Naive thymus-derived CD4-positive, alpha-beta T cell (primary cell): ENCODE measurements at regions of chr2 and their contacts with region 1.

Region 1: DNA sequence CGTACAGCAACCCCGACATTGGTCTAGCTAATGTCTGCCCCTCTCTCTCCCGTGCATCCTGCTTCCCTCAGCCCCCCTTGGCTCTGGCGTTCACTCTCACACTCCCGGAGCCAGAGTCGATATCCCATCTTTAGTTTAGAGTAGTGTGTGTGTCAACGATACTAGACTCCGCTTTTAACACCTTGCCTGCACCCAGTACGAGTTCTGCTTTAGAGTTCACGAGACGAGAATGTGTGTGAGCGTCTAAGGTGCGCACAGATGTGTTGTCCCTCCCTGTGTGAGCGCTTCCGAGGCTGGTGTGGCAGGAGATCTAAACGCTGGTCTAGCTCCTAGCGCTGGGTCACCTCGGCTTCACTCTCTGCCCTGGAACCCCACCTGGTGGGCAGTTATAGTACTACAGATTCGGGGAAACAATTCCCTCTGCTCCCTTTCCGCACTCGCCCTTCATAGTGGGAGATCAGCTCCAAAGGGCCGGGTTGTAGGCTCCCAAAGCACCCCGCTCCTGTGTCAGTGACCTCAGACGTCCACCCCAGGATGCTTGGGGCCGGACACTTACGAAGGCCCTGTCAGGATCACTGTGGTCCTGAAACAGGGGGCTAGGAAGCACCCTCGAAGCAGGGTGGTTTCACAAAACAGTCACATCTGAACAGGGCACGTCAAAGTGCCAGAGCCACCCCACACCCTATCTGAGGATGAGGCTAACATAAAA is 2.6 kb upstream of the CYP26B1 start:
- DNase-seq: peak in 7 of 9 donors; percentile 26 to 64 (median 53)
- ATAC-seq: peak; percentile 74
- H3K4me3 ChIP-seq: peak overlapping the region; percentile 64
- H3K4me3 Mint-ChIP-seq: peak overlapping the region; percentile 64 to 89 (median 78)
- H3K27ac ChIP-seq: no peak overlapping the region
- H3K27ac Mint-ChIP-seq: peak overlapping the region in 2 of 9 donors; percentile 7 to 54
- H3K4me1 ChIP-seq: peaks cover 4 to 12% of the 10 kb centered on the region in 2 donors
- H3K4me1 Mint-ChIP-seq: peaks cover 29 to 43% (median 36%) of the 10 kb centered on the region in 7 donors
- H3K27me3 ChIP-seq: peaks cover 6 to 22% of the 10 kb centered on the region in 2 donors
- H3K27me3 Mint-ChIP-seq: peaks cover 59 to 73% (median 67%) of the 10 kb centered on the region in 5 donors

Region 2: DNA sequence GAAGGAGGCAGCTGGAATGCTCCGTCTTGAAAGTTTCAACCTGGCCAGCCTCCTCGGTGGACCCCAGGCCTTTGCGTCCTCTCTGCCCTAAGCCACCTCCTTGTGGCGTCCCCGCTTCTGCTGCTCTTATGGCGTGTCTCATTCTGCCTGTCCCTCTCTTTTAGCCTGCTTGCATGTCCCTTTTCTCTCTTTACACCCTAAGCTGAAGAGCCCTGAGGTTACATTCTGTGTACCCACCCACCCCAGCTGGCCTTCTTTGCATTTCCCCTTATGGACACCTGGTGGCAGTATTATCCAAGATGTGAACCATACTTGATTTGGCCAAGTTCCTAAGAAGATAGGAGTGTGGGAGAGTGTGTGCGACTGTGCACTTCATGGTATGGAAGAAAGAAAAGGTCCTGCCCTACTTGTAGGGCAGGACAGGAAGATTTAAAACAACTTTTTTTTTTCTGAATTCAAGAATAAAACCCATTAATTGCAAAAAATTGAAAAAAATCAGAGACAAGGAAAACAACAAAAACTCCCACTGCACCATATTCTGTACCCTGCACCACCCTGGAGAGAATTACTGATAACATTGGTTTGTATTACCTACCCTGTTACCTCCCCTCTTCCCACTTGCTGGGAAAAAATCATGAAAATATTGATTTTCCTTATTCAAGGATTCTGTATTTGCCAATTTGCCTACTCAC is 619.5 kb before region 1 on chr2:
- CTCF ChIA-PET with region 1: no interaction called
- POLR2A ChIA-PET with region 1: no interaction called
- intact Hi-C with region 1: loop called in 1 of 2 experiments (anchors 1 kb)
- DNase-seq: no peak
- ATAC-seq: peak; percentile 54
- H3K4me3 ChIP-seq: no peak overlapping the region
- H3K4me3 Mint-ChIP-seq: no peak overlapping the region
- H3K27ac ChIP-seq: no peak overlapping the region
- H3K27ac Mint-ChIP-seq: no peak overlapping the region
- H3K4me1 ChIP-seq: no peaks in the 10 kb centered on the region
- H3K4me1 Mint-ChIP-seq: peaks cover 0 to 5% (median 0%) of the 10 kb centered on the region in 7 donors
- H3K27me3 ChIP-seq: no peaks in the 10 kb centered on the region
- H3K27me3 Mint-ChIP-seq: peaks cover 8 to 66% (median 42%) of the 10 kb centered on the region in 5 donors

Region 3: GRCh38 chr2:72165792-72166191 is 15.5 kb after region 1 on chr2:
- CTCF ChIA-PET with region 1: no interaction called
- POLR2A ChIA-PET with region 1: no interaction called
- intact Hi-C with region 1: no loop called
- DNase-seq: no peak
- ATAC-seq: no peak
- H3K4me3 ChIP-seq: no peak overlapping the region
- H3K4me3 Mint-ChIP-seq: no peak overlapping the region
- H3K27ac ChIP-seq: no peak overlapping the region
- H3K27ac Mint-ChIP-seq: no peak overlapping the region
- H3K4me1 ChIP-seq: no peaks in the 10 kb centered on the region
- H3K4me1 Mint-ChIP-seq: no peaks in the 10 kb centered on the region
- H3K27me3 ChIP-seq: peaks cover 0 to 2% of the 10 kb centered on the region in 2 donors
- H3K27me3 Mint-ChIP-seq: peaks cover 4 to 20% (median 14%) of the 10 kb centered on the region in 5 donors

Region 4: DNA sequence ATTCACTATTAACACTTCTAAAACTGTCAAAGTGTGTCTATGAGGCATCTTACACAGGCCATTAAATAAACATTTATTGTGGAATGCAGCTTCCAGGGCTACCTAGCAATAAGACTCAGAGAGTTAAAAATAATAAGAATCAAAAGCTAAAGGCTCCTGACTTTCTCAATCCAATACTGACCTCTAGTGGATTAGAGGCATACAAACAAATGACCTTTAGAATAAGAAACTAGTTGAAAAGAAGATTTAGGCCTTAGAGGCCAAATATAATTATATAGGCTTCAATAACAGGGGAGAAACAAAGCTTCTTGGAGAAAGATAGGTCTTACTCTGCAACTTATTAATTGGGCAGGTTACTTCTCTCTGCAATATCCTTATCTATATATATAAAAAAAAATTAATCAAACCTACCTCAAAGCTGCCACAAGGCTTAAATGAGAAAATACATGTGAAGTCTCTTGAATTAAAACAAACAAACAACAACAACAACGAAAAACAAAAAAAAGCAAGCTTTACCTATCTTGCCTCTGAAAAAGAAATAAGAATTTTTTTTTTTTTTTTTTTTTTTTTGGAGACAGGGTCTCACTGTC is 429.4 kb after region 1 on chr2:
- CTCF ChIA-PET with region 1: no interaction called
- POLR2A ChIA-PET with region 1: no interaction called
- intact Hi-C with region 1: loop called in 1 of 2 experiments (anchors 5 kb)
- DNase-seq: peak in 6 of 9 donors; percentile 0 to 32 (median 10)
- ATAC-seq: no peak
- H3K4me3 ChIP-seq: no peak overlapping the region
- H3K4me3 Mint-ChIP-seq: no peak overlapping the region
- H3K27ac ChIP-seq: no peak overlapping the region
- H3K27ac Mint-ChIP-seq: no peak overlapping the region
- H3K4me1 ChIP-seq: no peaks in the 10 kb centered on the region
- H3K4me1 Mint-ChIP-seq: peaks cover 0 to 8% (median 0%) of the 10 kb centered on the region in 7 donors
- H3K27me3 ChIP-seq: no peaks in the 10 kb centered on the region
- H3K27me3 Mint-ChIP-seq: peaks cover 0 to 3% (median 0%) of the 10 kb centered on the region in 5 donors

Region 5: GRCh38 chr2:72745679-72746368 is 595.5 kb after region 1 on chr2:
- CTCF ChIA-PET with region 1: no interaction called
- POLR2A ChIA-PET with region 1: no interaction called
- intact Hi-C with region 1: loop called in 1 of 2 experiments (anchors 10 kb)
- DNase-seq: peak in 5 of 9 donors; percentile 14 to 39 (median 26)
- ATAC-seq: no peak
- H3K4me3 ChIP-seq: no peak overlapping the region
- H3K4me3 Mint-ChIP-seq: no peak overlapping the region
- H3K27ac ChIP-seq: no peak overlapping the region
- H3K27ac Mint-ChIP-seq: no peak overlapping the region
- H3K4me1 ChIP-seq: no peaks in the 10 kb centered on the region
- H3K4me1 Mint-ChIP-seq: no peaks in the 10 kb centered on the region
- H3K27me3 ChIP-seq: no peaks in the 10 kb centered on the region
- H3K27me3 Mint-ChIP-seq: no peaks in the 10 kb centered on the region

Region 6: GRCh38 chr2:72915907-72916742 is 765.8 kb after region 1 on chr2:
- CTCF ChIA-PET with region 1: no interaction called
- POLR2A ChIA-PET with region 1: no interaction called
- intact Hi-C with region 1: loop called in 1 of 2 experiments (anchors 5 kb)
- DNase-seq: peak in 7 of 9 donors; percentile 27 to 53 (median 41)
- ATAC-seq: peak; percentile 62
- H3K4me3 ChIP-seq: peak overlapping the region; percentile 47
- H3K4me3 Mint-ChIP-seq: peak overlapping the region; percentile 56 to 89 (median 82)
- H3K27ac ChIP-seq: no peak overlapping the region
- H3K27ac Mint-ChIP-seq: no peak overlapping the region
- H3K4me1 ChIP-seq: peaks cover 13 to 31% of the 10 kb centered on the region in 2 donors
- H3K4me1 Mint-ChIP-seq: peaks cover 8 to 32% (median 28%) of the 10 kb centered on the region in 7 donors
- H3K27me3 ChIP-seq: peaks cover 17 to 44% of the 10 kb centered on the region in 2 donors
- H3K27me3 Mint-ChIP-seq: peaks cover 57 to 83% (median 58%) of the 10 kb centered on the region in 5 donors